Adrenal gland (tissue), 19 donors: ENCODE measurements at regions of chr15 and their contacts with region 1.

Region 1: DNA sequence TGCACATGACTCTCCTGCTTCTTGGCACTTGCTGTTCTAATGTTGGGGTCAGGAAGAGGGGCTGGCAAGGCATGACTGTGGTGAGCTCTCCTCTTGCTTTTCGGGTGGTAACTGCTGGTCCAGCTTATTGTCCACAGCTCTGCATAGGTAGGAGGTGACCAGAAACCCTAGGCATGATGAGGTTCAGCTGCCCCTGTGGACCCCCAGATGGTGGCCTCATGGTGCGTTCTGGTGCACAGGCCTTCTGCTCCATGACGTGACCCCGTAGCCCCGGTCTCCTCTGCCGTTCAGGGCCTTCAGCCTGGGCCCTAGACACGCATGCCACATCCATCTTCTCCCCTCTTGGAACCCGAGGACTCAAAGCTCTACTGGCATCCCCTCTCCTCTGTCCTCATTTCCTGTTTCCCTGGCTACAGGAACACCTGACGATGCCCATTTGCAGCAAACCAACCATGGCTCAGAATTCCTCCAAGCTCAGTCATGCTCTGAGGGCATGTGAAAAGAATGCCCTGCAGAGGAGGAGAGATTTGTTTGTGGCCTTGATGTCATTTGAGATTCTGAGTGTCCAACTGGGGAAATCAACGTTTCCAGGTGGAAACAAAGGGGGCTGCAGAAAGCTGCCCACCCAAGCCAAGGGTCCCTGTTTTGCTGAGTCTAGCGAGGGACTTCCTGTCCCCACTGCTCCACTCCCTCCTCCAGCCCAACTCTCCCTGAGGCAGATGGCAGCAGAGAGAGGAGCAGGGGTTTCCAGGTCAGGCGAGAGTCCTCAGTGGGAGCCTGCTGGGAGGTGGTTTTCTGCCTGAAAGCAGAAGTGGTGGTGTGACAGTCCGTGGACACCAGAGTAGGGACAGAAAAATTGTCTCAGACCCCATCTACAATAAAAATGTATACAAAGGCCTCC is 198.7 kb upstream of the LYSMD4 start:
- DNase-seq: no peak
- H3K4me3 ChIP-seq: no peak overlapping the region
- H3K27ac ChIP-seq: no peak overlapping the region
- H3K4me1 ChIP-seq: peaks cover 3 to 5% of the 10 kb centered on the region in 2 donors
- H3K27me3 ChIP-seq: no peaks in the 10 kb centered on the region
- CTCF ChIP-seq: no peak
- POLR2A ChIP-seq: no peak

Region 2: GRCh38 chr15:100131321-100132224 is 199.6 kb after region 1 on chr15:
- intact Hi-C with region 1: loop called in 1 of 2 experiments (anchors 10 kb)
- DNase-seq: peak; percentile 59 to 76 (median 69)
- H3K4me3 ChIP-seq: peak overlapping the region in 1 of 4 donors; percentile 33
- H3K27ac ChIP-seq: peak overlapping the region in 1 of 5 donors; percentile 35
- H3K4me1 ChIP-seq: no peaks in the 10 kb centered on the region
- H3K27me3 ChIP-seq: no peaks in the 10 kb centered on the region
- CTCF ChIP-seq: peak; percentile 9 to 56 (median 46)
- POLR2A ChIP-seq: peak in 1 of 2 donors; percentile 10

Region 3: GRCh38 chr15:100330629-100331215 is 398.8 kb after region 1 on chr15:
- intact Hi-C with region 1: loop called (anchors 5 to 10 kb)
- DNase-seq: no peak
- H3K4me3 ChIP-seq: no peak overlapping the region
- H3K27ac ChIP-seq: no peak overlapping the region
- H3K4me1 ChIP-seq: no peaks in the 10 kb centered on the region
- H3K27me3 ChIP-seq: no peaks in the 10 kb centered on the region
- CTCF ChIP-seq: no peak
- POLR2A ChIP-seq: no peak

Region 4: GRCh38 chr15:100383302-100384107 is 451.6 kb after region 1 on chr15:
- intact Hi-C with region 1: loop called in 1 of 2 experiments (anchors 10 kb)
- DNase-seq: peak; percentile 30 to 61 (median 53)
- H3K4me3 ChIP-seq: no peak overlapping the region
- H3K27ac ChIP-seq: no peak overlapping the region
- H3K4me1 ChIP-seq: no peaks in the 10 kb centered on the region
- H3K27me3 ChIP-seq: no peaks in the 10 kb centered on the region
- CTCF ChIP-seq: peak; percentile 47 to 68 (median 62)
- POLR2A ChIP-seq: no peak